Activated CD8-positive, alpha-beta T cell treated with anti-CD3 and anti-CD28 coated beads for 36 hours (primary cell): ENCODE measurements at regions of chr1 and their contacts with region 1.

Region 1: DNA sequence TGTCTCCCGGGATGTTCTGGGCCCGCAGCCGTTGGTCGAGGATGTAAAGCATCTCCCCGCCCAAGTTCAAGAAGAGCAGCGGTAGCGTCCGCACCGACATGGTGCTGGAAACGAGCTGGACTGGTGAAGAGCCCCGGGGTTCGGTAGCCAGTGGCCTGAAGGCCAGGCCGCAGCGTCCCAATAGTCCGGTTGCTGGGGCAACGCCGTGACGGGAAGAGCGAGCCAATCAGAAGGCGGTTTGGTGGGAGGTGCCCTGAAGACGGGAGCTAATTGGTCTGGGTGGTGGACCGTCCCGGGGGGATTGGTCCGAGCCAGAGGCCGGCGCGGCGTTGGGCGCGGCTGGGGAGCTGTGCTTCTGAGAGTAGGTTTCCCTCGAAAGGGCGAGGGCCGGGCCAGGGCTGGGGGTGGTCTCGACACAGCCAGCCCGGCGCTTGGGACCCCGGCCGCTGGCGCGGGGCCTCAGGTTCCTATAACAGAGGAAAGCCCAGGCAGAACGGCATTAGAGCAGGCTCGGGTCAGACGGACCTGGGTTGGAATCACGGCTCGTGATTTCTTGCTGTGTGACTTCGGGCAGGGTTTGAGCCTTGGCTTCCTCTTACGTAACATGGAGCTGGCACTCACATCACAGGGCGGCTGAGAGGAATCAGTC is at the start of gene OSCP1:
- DNase-seq: peak; percentile 90
- ATAC-seq: peak; percentile 99
- H3K4me3 Mint-ChIP-seq: peak within 1 kb of the TSS; percentile 82
- H3K27ac Mint-ChIP-seq: peak within 1 kb of the TSS; percentile 83
- H3K4me1 Mint-ChIP-seq: peaks cover 10% of the 10 kb centered on the region
- H3K27me3 Mint-ChIP-seq: no peaks in the 10 kb centered on the region
- CTCF ChIP-seq: no peak
- total RNA-seq, gene OSCP1: 1.2 to 1.5 TPM

Region 2: DNA sequence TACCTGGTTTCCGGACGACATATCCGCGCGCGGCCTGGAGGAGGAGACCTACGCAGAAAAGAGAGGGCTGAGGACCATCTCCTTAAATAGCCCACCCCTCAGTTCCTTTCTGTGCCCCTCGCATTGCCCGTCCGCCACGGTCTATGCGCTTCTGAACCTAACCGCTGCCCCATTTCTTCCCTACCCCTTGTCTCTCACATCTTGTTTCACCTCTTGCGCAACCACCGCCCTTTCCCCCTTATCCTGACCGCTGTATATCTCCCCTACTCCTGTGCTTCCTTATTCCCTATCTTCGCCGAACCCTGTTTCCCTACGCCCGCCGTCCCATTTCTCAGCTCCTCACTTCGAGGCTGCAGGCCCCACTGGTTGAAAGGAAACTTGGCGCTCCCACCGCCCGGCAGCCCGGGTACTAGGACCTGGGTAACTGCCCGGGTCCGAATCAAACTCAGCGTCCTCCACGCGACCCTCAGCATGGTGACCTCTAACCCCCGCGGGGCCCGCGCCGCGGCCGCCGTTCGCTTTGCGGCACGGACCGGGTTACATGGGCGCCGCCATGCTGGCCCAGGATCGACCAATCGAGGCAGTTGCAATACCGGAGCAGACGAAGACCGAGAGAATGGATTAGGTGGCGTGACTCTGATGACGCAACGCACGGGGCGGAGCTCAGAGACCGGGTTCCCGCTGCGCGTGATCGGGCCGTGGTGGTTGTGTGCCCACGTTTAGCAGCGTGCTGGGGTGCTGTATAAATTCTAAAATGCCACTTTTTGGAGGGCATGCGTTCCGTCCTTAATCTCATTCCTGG is 13.6 kb after region 1 on chr1 and contains the start of gene MRPS15:
- CTCF ChIA-PET with region 1: interaction called, 3 read pairs
- POLR2A ChIA-PET with region 1: interaction called, 14 read pairs
- intact Hi-C with region 1: no loop called
- DNase-seq: peak; percentile 99
- ATAC-seq: peak; percentile 95
- H3K4me3 Mint-ChIP-seq: peak within 1 kb of the TSS; percentile 99
- H3K27ac Mint-ChIP-seq: peak within 1 kb of the TSS; percentile 97
- H3K4me1 Mint-ChIP-seq: peaks cover 24% of the 10 kb centered on the region
- H3K27me3 Mint-ChIP-seq: no peaks in the 10 kb centered on the region
- CTCF ChIP-seq: no peak
- total RNA-seq, gene MRPS15: 120 to 129 TPM